H1 (cell line): ENCODE measurements at regions of chr17 and their contacts with region 1.

Region 1: DNA sequence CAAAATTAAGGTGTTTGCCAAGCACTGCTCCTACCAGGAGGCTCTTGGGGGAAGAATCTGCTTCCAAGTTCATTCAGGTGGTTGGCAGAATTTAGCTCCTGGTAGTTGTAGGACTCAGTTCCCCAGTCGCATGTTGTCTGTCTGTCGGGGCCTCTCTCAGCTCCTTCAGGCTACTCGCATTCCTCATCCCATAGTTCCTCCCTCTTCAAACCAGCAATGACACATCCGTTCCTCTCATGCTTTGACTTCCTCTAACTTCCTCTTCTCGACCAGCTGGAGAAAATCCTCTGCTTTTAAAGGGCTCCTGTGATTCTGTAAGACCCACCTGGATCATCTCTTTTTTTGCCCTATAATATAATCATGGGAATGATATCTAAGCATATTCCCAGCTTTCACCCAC is 108.1 kb downstream of the PMP22 start:
- DNase-seq: no peak
- H3K4me3 ChIP-seq: no peak overlapping the region
- H3K27ac ChIP-seq: no peak overlapping the region
- H3K4me1 ChIP-seq: no peaks in the 10 kb centered on the region
- H3K27me3 ChIP-seq: no peaks in the 10 kb centered on the region
- CTCF ChIP-seq: no peak
- EP300 ChIP-seq: no peak
- POLR2A ChIP-seq: no peak
- RAD21 ChIP-seq: no peak

Region 2: DNA sequence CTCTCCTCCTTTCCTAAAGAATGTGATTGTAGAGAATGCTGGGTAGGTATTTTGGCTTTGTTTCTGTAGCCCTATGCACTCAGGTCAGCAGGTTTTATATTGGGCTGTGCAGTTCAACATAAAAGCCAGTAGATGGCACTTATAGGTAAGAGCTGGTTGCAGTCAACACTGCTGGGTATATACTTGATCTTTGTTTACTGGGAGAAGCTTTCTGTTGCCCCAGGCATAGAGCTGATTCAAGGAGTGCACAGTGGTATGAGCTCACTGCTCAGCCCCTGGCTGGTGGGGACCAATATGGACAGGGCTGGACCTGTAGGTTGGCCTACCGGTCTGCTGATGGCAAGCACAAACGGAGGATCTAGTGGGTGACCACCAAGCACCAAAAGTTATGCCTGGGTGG is 270.8 kb before region 1 on chr17:
- CTCF ChIA-PET with region 1: interaction called, 20 read pairs
- POLR2A ChIA-PET with region 1: no interaction called
- DNase-seq: peak in 1 of 2 experiments; percentile 0
- H3K4me3 ChIP-seq: no peak overlapping the region
- H3K27ac ChIP-seq: no peak overlapping the region
- H3K4me1 ChIP-seq: no peaks in the 10 kb centered on the region
- H3K27me3 ChIP-seq: no peaks in the 10 kb centered on the region
- CTCF ChIP-seq: peak in 2 of 3 experiments; percentile 57 to 63; a peak in 3 of 4 replicates
- EP300 ChIP-seq: no peak
- POLR2A ChIP-seq: no peak
- RAD21 ChIP-seq: peak; percentile 69 to 80

Region 3: GRCh38 chr17:15096511-15096910 is 60.5 kb before region 1 on chr17:
- CTCF ChIA-PET with region 1: no interaction called
- POLR2A ChIA-PET with region 1: no interaction called
- DNase-seq: no peak
- H3K4me3 ChIP-seq: no peak overlapping the region
- H3K27ac ChIP-seq: no peak overlapping the region
- H3K4me1 ChIP-seq: peaks cover 0 to 11% (median 2%) of the 10 kb centered on the region in 4 experiments; a peak in 2 of 7 replicates
- H3K27me3 ChIP-seq: no peaks in the 10 kb centered on the region
- CTCF ChIP-seq: no peak
- EP300 ChIP-seq: no peak
- POLR2A ChIP-seq: no peak
- RAD21 ChIP-seq: no peak

Region 4: DNA sequence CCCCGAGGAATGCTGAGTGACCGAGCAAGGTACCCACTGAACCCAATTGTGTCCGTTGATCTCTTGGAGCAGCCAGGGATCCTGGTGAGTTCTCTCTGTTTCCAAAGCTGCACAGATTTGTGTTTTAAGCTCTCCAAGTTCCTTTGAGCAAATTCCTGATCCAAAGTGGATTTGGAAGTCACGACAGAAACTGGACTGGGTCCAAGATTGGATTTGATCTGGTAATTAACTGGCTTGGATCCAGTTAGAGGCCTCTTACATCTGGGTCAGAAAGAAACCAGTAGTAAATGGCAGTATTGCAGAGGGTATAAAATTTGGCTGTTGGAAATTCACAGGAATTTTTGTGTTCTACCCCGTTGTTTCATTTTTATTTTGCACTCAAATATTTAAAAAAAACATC is 11.4 kb before region 1 on chr17:
- CTCF ChIA-PET with region 1: interaction called, 15 read pairs
- POLR2A ChIA-PET with region 1: no interaction called
- DNase-seq: no peak
- H3K4me3 ChIP-seq: no peak overlapping the region
- H3K27ac ChIP-seq: no peak overlapping the region
- H3K4me1 ChIP-seq: no peaks in the 10 kb centered on the region
- H3K27me3 ChIP-seq: no peaks in the 10 kb centered on the region
- CTCF ChIP-seq: no peak
- EP300 ChIP-seq: no peak
- POLR2A ChIP-seq: no peak
- RAD21 ChIP-seq: no peak

Region 5: GRCh38 chr17:15171167-15172047 is 14.4 kb after region 1 on chr17:
- CTCF ChIA-PET with region 1: interaction called, 10 read pairs
- POLR2A ChIA-PET with region 1: no interaction called
- DNase-seq: peak; percentile 44 to 83
- H3K4me3 ChIP-seq: no peak overlapping the region
- H3K27ac ChIP-seq: no peak overlapping the region
- H3K4me1 ChIP-seq: 0 out of 7 replicates have a peak, but pooled peaks cover 0 to 3% (median 0%) of the 10 kb centered on the region in 4 experiments
- H3K27me3 ChIP-seq: no peaks in the 10 kb centered on the region
- CTCF ChIP-seq: peak; percentile 81 to 94 (median 87)
- EP300 ChIP-seq: peak in 1 of 2 experiments; percentile 39; a peak in 1 of 3 replicates
- POLR2A ChIP-seq: no peak
- RAD21 ChIP-seq: peak; percentile 88 to 90

Region 6: DNA sequence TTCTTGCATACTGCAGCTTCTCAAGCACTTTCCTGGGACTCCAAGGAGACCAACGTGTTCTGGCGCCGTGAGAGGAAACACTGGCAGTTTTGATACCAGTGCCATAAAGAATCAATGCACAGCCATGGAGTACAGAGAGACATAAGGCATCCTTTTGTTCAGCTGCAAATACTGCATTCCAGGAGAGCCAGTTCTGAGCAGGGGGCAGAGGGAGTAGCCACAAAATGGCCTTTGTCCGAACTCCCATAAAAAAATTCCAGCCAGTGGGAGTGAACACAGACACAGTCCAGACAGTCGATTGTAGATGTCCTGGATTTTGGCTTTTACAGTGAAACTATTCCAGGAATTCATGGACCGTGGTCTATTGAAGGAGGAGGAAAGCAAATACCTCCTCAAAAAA is 220.6 kb after region 1 on chr17:
- CTCF ChIA-PET with region 1: no interaction called
- POLR2A ChIA-PET with region 1: no interaction called
- DNase-seq: no peak
- H3K4me3 ChIP-seq: no peak overlapping the region
- H3K27ac ChIP-seq: no peak overlapping the region
- H3K4me1 ChIP-seq: no peaks in the 10 kb centered on the region
- H3K27me3 ChIP-seq: no peaks in the 10 kb centered on the region
- CTCF ChIP-seq: no peak
- EP300 ChIP-seq: no peak
- POLR2A ChIP-seq: no peak
- RAD21 ChIP-seq: no peak